ENCODE measurements at regions of chr11 and their contacts with region 1.

Region 1: GRCh38 chr11:1050581-1051355 is 14.2 kb upstream of the MUC6 start:
- DNase-seq: peak; percentile 80
- H3K4me3 ChIP-seq: no peak overlapping the region
- H3K27ac ChIP-seq: no peak overlapping the region
- H3K4me1 ChIP-seq: peaks cover 18% of the 10 kb centered on the region
- H3K27me3 ChIP-seq: no peaks in the 10 kb centered on the region
- CTCF ChIP-seq: peak; percentile 93 to 99

Region 2: DNA sequence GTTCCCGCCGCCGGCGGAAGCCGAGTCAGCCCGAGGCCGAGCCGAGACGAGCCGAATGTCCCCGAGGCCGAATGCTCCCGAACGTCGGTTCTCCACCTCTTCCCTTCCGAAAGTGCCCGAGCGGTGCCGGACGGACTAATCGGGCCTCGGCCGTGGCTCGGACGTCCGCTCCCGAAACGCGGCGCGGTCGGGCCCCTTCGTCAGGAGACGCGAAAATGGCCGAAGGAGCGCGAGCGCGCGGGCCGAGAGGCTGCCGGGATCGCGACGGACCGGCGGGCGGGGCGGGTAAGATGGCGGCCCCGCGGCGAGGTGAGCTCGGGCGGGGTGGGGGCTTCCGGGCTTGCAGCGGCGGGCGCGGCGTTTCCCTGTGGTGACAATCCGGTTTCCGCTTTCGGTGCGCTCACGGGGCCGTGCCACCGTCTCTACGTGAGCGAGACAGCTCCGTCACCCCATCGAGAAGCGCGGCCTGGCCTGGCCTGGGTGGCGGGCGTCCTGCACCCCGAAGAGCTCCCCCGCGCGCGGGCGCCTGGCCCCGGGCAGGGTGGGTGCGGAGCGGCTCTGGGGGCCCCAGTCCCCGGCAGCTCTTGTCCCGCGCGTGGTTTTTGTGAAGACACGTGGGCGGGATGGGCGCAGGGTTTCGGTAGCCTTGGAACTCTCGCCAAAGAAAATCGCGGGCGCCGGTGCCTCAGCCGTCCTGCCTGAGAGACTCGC is 355.1 kb before region 1 on chr11 and contains the start of gene TMEM80:
- CTCF ChIA-PET with region 1: no interaction called
- dilution Hi-C with region 1: no loop called
- in situ Hi-C with region 1: no loop called
- intact Hi-C with region 1: loop called (anchors 10 kb)
- DNase-seq: peak; percentile 97
- H3K4me3 ChIP-seq: peak within 1 kb of the TSS; percentile 61 to 76 (median 68)
- H3K27ac ChIP-seq: peak within 1 kb of the TSS; percentile 97
- H3K4me1 ChIP-seq: peaks cover 50% of the 10 kb centered on the region
- H3K27me3 ChIP-seq: no peaks in the 10 kb centered on the region
- CTCF ChIP-seq: no peak
- total RNA-seq, gene TMEM80: 10.0 to 22.5 TPM

Region 3: DNA sequence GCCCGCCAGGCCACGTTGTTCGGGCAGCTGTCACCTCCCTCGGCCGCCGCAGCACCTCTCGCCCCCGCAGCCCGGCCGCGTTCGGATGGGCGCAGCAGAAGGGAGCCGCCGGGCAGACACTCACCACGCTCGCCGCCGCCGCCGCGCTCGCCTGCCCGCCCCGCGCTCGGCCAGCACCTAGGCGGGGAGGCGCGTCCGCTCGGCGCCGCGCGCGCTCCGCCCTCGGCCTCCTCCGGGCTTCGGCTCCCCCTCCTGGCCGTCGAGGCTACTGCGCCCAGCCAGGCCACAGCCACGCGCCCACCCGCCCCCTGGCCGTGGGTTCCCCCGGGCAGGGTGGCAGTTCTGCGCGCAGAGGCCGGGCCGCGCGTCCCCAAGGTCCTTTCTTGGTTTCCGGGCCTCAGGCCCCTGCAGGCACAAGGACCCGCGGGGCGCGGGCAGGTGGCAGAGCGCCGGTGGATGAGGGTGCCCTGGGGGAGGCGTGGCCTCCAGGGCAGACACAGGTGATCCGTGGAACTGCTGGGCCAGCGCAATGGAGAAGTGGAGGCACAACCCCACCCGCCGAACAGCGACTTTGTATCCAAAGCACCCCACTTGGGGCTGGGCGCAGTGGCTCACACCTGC is 252.6 kb before region 1 on chr11 and contains the start of gene SLC25A22:
- CTCF ChIA-PET with region 1: no interaction called
- dilution Hi-C with region 1: no loop called
- in situ Hi-C with region 1: no loop called
- intact Hi-C with region 1: loop called (anchors 5 kb)
- DNase-seq: peak; percentile 80
- H3K4me3 ChIP-seq: peak within 1 kb of the TSS; percentile 55 to 93 (median 88)
- H3K27ac ChIP-seq: peak within 1 kb of the TSS; percentile 9
- H3K4me1 ChIP-seq: peaks cover 23% of the 10 kb centered on the region
- H3K27me3 ChIP-seq: no peaks in the 10 kb centered on the region
- CTCF ChIP-seq: peak; percentile 42 to 67
- total RNA-seq, gene SLC25A22: 7.3 to 29.5 TPM

Region 4: GRCh38 chr11:910589-911195 is 140.1 kb before region 1 on chr11 and contains the start of gene CHID1:
- CTCF ChIA-PET with region 1: no interaction called
- dilution Hi-C with region 1: loop called (anchors 5 kb)
- in situ Hi-C with region 1: no loop called
- intact Hi-C with region 1: no loop called
- DNase-seq: peak; percentile 86
- H3K4me3 ChIP-seq: peak within 1 kb of the TSS; percentile 88 to 91 (median 89)
- H3K27ac ChIP-seq: peak within 1 kb of the TSS; percentile 24
- H3K4me1 ChIP-seq: peaks cover 11% of the 10 kb centered on the region
- H3K27me3 ChIP-seq: no peaks in the 10 kb centered on the region
- CTCF ChIP-seq: peak in 1 of 2 donors; percentile 12
- total RNA-seq, gene CHID1: 61.7 to 110 TPM

Region 5: GRCh38 chr11:975827-976226 is 74.9 kb before region 1 on chr11:
- CTCF ChIA-PET with region 1: no interaction called
- dilution Hi-C with region 1: no loop called
- in situ Hi-C with region 1: no loop called
- intact Hi-C with region 1: loop called (anchors 5 kb)
- DNase-seq: no peak
- H3K4me3 ChIP-seq: no peak overlapping the region
- H3K27ac ChIP-seq: no peak overlapping the region
- H3K4me1 ChIP-seq: no peaks in the 10 kb centered on the region
- H3K27me3 ChIP-seq: no peaks in the 10 kb centered on the region
- CTCF ChIP-seq: no peak

Region 6: GRCh38 chr11:1139441-1140083 is 88.8 kb after region 1 on chr11:
- CTCF ChIA-PET with region 1: no interaction called
- dilution Hi-C with region 1: loop called (anchors 5 kb)
- in situ Hi-C with region 1: no loop called
- intact Hi-C with region 1: no loop called
- DNase-seq: peak; percentile 20
- H3K4me3 ChIP-seq: no peak overlapping the region
- H3K27ac ChIP-seq: no peak overlapping the region
- H3K4me1 ChIP-seq: no peaks in the 10 kb centered on the region
- H3K27me3 ChIP-seq: no peaks in the 10 kb centered on the region
- CTCF ChIP-seq: no peak